Activated naive CD4-positive, alpha-beta T cell treated with anti-CD3 and anti-CD28 coated beads for 36 hours (primary cell): ENCODE measurements at regions of chr3 and their contacts with region 1.

Region 1: GRCh38 chr3:14467814-14468620 is 65.6 kb downstream of the SLC6A6 start:
- DNase-seq: peak; percentile 47
- H3K4me3 Mint-ChIP-seq: no peak overlapping the region
- H3K27ac Mint-ChIP-seq: peak overlapping the region; percentile 30
- H3K4me1 Mint-ChIP-seq: peaks cover under 1% of the 10 kb centered on the region
- H3K27me3 Mint-ChIP-seq: no peaks in the 10 kb centered on the region

Region 2: GRCh38 chr3:14203521-14204079 is 264.4 kb before region 1 on chr3:
- CTCF ChIA-PET with region 1: interaction called, 16 read pairs
- intact Hi-C with region 1: loop called (anchors 1 kb)
- DNase-seq: peak; percentile 64
- H3K4me3 Mint-ChIP-seq: no peak overlapping the region
- H3K27ac Mint-ChIP-seq: no peak overlapping the region
- H3K4me1 Mint-ChIP-seq: peaks cover 2% of the 10 kb centered on the region
- H3K27me3 Mint-ChIP-seq: no peaks in the 10 kb centered on the region

Region 3: GRCh38 chr3:14274999-14275961 is 192.7 kb before region 1 on chr3:
- CTCF ChIA-PET with region 1: interaction called, 6 read pairs
- intact Hi-C with region 1: loop called (anchors 1 kb)
- DNase-seq: peak; percentile 15
- H3K4me3 Mint-ChIP-seq: no peak overlapping the region
- H3K27ac Mint-ChIP-seq: no peak overlapping the region
- H3K4me1 Mint-ChIP-seq: no peaks in the 10 kb centered on the region
- H3K27me3 Mint-ChIP-seq: no peaks in the 10 kb centered on the region

Region 4: DNA sequence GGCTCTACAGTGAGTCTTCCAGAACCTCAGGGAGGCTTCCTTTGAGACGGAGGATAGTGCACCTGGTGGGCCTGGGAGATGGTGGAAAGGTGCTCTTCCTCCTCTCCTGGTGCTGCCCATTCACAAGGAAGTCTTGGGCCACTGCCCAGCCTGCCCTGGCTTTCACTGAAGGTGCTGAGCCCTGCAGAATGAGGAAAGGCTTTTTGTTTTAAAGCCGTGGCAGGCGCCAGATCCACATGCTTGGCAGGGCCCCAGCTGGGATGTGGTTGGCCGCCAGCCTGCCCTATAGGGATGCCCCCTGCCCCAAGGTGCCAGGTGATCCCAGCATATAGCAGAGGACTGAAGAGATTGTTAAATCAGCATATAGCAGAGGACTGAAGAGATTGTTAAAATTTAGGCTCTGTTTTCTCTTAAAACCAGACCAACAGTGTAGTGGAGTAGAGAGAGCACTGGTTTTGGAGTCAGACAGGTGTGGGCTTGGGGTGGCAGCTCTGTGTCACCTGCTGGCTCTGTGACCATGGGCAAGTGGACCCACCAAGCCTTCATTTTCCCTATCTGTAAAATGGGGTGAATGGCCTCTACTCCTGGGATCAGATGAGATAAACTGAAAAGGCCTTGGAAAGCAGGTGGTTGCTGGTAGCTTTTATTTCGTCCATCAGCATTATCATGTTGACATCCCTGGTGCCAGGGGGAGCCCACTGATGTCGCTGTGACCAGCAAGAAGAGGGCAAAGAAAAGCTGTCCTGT is 12.3 kb before region 1 on chr3:
- CTCF ChIA-PET with region 1: interaction called, 11 read pairs
- intact Hi-C with region 1: no loop called
- DNase-seq: no peak
- H3K4me3 Mint-ChIP-seq: no peak overlapping the region
- H3K27ac Mint-ChIP-seq: no peak overlapping the region
- H3K4me1 Mint-ChIP-seq: peaks cover 19% of the 10 kb centered on the region
- H3K27me3 Mint-ChIP-seq: no peaks in the 10 kb centered on the region